Transverse colon (tissue), 4 donors: ENCODE measurements at regions of chr11 and their contacts with region 1.

Region 1: GRCh38 chr11:35305670-35306382 is 113.5 kb downstream of the SLC1A2 start:
- DNase-seq: peak; percentile 37
- H3K4me3 ChIP-seq: no peak overlapping the region
- H3K27ac ChIP-seq: no peak overlapping the region
- H3K4me1 ChIP-seq: peaks cover 0 to 21% (median 4%) of the 10 kb centered on the region in 4 donors
- H3K27me3 ChIP-seq: no peaks in the 10 kb centered on the region
- CTCF ChIP-seq: peak; percentile 39 to 57 (median 50)
- EP300 ChIP-seq: no peak
- POLR2A ChIP-seq: no peak

Region 2: GRCh38 chr11:34926101-34926830 is 379.6 kb before region 1 on chr11:
- in situ Hi-C with region 1: loop called in 1 of 4 experiments (anchors 10 kb)
- intact Hi-C with region 1: no loop called
- DNase-seq: no peak
- H3K4me3 ChIP-seq: no peak overlapping the region
- H3K27ac ChIP-seq: no peak overlapping the region
- H3K4me1 ChIP-seq: peaks cover 3 to 51% (median 23%) of the 10 kb centered on the region in 4 donors
- H3K27me3 ChIP-seq: no peaks in the 10 kb centered on the region
- CTCF ChIP-seq: peak; percentile 64 to 73 (median 68)
- EP300 ChIP-seq: no peak
- POLR2A ChIP-seq: no peak

Region 3: DNA sequence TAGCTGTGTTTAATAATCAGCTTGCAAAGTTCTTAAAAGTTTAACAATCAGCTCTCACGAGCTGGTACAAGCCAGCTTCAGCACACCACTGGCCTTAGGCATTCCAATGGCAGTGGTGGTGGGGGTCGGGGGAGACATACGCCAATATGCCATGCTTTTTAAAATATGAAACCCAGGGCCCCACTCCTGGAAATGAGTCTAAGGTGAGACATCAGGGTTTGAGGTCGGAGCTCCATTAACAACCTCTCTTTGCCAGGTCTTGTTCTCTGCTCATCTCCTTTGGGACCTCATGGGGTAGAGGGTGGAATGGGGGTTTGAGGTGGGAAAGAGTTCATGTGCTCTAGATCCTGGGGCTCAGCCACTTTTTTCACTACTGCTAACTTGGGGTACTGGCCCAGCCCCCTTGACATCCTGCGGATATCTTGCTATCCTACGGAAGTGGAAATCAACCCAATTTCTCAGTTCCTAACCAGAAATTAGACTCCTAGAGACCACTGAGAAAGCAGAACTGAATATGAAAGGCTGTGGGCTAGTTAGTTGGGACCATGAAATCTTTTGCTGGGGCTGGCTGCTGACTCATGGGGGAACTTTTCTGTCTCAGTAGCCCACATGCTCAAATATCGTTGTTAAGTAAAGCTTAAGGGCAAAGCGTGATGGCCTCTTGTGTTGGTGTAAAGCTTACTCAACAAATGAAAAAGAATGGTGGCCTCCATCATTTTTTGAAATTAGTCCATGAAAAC is 299.3 kb before region 1 on chr11:
- in situ Hi-C with region 1: no loop called
- intact Hi-C with region 1: loop called (anchors 10 kb)
- DNase-seq: peak; percentile 20
- H3K4me3 ChIP-seq: no peak overlapping the region
- H3K27ac ChIP-seq: peak overlapping the region in 2 of 4 donors; percentile 31 to 69
- H3K4me1 ChIP-seq: peaks cover 5 to 60% (median 37%) of the 10 kb centered on the region in 4 donors
- H3K27me3 ChIP-seq: no peaks in the 10 kb centered on the region
- CTCF ChIP-seq: no peak
- EP300 ChIP-seq: no peak
- POLR2A ChIP-seq: no peak

Region 4: GRCh38 chr11:35138943-35139721 is 166.7 kb before region 1 on chr11 and contains the start of gene CD44:
- in situ Hi-C with region 1: no loop called
- intact Hi-C with region 1: loop called (anchors 10 kb)
- DNase-seq: peak; percentile 86
- H3K4me3 ChIP-seq: peak within 1 kb of the TSS; percentile 64 to 83 (median 69)
- H3K27ac ChIP-seq: peak within 1 kb of the TSS; percentile 85 to 95 (median 92)
- H3K4me1 ChIP-seq: peaks cover 15 to 52% (median 40%) of the 10 kb centered on the region in 4 donors
- H3K27me3 ChIP-seq: no peaks in the 10 kb centered on the region
- CTCF ChIP-seq: no peak
- EP300 ChIP-seq: no peak
- POLR2A ChIP-seq: peak; percentile 76
- total RNA-seq, gene CD44: 56.3 to 182 (median 114) TPM